HEK293 (cell line): ENCODE measurements at regions of chr14 and their contacts with region 1.

Region 1: GRCh38 chr14:104563742-104564615 is 15.6 kb upstream of the C14orf180 start:
- H3K4me3 ChIP-seq: no peak overlapping the region
- H3K27ac ChIP-seq: no peak overlapping the region
- H3K4me1 ChIP-seq: no peaks in the 10 kb centered on the region
- CTCF ChIP-seq: peak; percentile 96

Region 2: DNA sequence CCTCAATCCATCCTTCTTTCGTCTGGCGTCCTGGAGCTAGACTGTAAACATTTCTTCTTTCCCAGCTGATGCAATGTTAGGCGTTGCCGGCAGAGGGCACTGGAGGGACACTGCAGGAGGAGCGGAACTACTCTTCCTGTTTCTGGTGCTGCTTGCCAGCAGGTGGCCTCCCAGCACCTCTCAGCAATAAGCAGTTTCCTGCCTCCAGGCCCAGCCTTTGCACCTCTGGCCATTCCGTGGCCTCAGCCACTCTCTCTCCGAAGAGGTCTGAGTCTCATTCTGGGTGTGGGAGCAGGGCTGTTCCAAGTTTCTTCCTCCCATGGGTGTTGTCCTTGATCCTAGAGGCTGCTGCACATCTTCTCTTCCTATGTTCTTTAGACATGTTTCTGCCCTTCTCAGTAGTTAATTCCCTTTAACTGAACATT is 485.9 kb before region 1 on chr14:
- CTCF ChIA-PET with region 1: interaction called, 13 read pairs
- POLR2A ChIA-PET with region 1: no interaction called
- H3K4me3 ChIP-seq: no peak overlapping the region
- H3K27ac ChIP-seq: no peak overlapping the region
- H3K4me1 ChIP-seq: no peaks in the 10 kb centered on the region; the same call in 1 of the 2 replicates
- CTCF ChIP-seq: peak; percentile 100

Region 3: DNA sequence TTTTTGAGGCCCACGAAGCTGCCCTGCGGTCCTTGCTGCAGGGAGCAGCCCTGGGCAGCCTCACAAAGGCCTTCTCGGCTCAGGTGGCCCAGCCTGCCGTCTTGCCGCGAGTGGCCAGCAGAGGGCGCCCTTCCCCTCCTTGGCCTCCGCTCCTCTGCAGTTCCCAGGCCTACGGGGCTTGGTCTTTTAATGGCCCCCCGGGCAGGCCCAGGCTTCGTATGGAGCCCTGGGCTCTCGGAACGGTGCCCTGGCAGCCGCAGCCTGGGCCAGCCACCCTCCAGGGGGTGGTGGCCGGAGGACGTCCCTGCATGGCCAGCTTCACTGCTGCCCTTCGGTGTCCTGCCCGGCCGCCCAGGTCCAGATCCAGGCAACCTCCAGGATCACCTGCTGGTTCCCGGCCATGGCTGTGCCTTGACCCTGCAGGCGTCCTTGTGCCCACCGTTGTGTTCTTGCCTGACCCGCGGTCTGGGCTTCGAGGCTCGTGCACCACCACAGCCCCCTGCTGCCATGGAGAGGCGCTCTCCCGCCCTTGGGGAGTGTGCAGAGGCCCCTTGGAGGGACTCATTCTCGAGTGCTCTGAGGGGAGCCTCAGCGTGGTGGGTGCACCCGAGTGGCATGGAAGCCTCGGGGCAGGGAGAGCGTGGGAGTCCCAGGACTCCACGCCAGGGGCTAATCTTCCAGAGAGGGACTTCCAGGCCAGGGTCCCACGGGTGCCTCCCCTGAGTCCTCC is 469.1 kb before region 1 on chr14:
- CTCF ChIA-PET with region 1: interaction called, 20 read pairs
- POLR2A ChIA-PET with region 1: no interaction called
- H3K4me3 ChIP-seq: no peak overlapping the region
- H3K27ac ChIP-seq: no peak overlapping the region
- H3K4me1 ChIP-seq: no peaks in the 10 kb centered on the region
- CTCF ChIP-seq: peak; percentile 95

Region 4: GRCh38 chr14:104130974-104131651 is 432.9 kb before region 1 on chr14:
- CTCF ChIA-PET with region 1: interaction called, 20 read pairs
- POLR2A ChIA-PET with region 1: no interaction called
- H3K4me3 ChIP-seq: no peak overlapping the region
- H3K27ac ChIP-seq: no peak overlapping the region
- H3K4me1 ChIP-seq: no peaks in the 10 kb centered on the region; the same call in 1 of the 2 replicates
- CTCF ChIP-seq: no peak

Region 5: DNA sequence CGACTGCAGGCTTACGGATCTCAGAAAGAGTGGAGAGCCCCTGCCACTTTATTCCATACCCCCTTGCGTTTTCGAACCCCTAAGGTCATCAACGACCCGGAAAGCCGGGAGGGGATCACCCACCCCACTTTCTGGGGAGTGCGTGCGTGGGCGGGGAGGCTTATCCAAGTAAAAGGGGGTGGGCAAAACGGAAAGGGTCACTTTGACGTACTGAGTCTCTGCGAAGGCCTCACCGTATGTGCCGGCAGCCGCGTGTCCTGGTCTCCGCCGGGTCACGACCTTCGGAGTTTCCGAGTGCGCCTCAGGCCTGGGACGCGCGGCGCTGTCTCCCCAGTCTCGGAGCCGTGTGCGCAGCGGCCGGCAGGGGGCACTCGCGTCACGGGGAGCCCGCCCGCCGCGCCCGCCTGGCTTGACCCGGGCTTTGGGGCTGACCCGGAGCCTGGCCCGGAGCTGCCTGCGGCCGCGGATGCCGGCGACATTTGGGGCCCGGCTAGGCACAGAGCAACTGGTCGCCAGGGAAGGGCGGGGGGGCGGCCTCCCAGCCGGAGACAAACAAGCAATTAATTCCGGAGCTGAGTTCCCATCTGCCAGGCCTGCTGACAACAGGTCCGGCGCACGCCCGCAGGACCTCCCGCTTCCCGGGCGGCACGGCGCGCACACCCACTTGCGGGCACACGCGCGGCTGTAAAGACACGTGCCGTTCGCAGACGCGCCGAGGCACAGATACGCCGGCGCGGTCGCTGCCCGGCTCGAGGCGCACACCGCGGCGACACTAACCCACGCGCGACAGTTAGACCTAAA is 426.5 kb before region 1 on chr14:
- CTCF ChIA-PET with region 1: interaction called, 18 read pairs
- POLR2A ChIA-PET with region 1: no interaction called
- H3K4me3 ChIP-seq: peak overlapping the region; percentile 45
- H3K27ac ChIP-seq: peak overlapping the region; percentile 62; the same call in 1 of the 2 replicates
- H3K4me1 ChIP-seq: peaks cover 7% of the 10 kb centered on the region
- CTCF ChIP-seq: peak; percentile 50

Region 6: GRCh38 chr14:104370256-104370870 is 193.6 kb before region 1 on chr14:
- CTCF ChIA-PET with region 1: interaction called, 10 read pairs
- POLR2A ChIA-PET with region 1: no interaction called
- H3K4me3 ChIP-seq: no peak overlapping the region
- H3K27ac ChIP-seq: no peak overlapping the region
- H3K4me1 ChIP-seq: no peaks in the 10 kb centered on the region
- CTCF ChIP-seq: peak; percentile 80